ENCODE measurements at regions of chr5 and their contacts with region 1.

Region 1: GRCh38 chr5:109688971-109689739 is 572 bp upstream of the MAN2A1 start:
- DNase-seq: peak; percentile 94
- H3K4me3 ChIP-seq: peak overlapping the region; percentile 94
- H3K27ac ChIP-seq: peak overlapping the region; percentile 85
- H3K4me1 ChIP-seq: peaks cover 22% of the 10 kb centered on the region
- CTCF ChIP-seq: peak; percentile 35; the same call in 1 of the 2 replicates

Region 2: DNA sequence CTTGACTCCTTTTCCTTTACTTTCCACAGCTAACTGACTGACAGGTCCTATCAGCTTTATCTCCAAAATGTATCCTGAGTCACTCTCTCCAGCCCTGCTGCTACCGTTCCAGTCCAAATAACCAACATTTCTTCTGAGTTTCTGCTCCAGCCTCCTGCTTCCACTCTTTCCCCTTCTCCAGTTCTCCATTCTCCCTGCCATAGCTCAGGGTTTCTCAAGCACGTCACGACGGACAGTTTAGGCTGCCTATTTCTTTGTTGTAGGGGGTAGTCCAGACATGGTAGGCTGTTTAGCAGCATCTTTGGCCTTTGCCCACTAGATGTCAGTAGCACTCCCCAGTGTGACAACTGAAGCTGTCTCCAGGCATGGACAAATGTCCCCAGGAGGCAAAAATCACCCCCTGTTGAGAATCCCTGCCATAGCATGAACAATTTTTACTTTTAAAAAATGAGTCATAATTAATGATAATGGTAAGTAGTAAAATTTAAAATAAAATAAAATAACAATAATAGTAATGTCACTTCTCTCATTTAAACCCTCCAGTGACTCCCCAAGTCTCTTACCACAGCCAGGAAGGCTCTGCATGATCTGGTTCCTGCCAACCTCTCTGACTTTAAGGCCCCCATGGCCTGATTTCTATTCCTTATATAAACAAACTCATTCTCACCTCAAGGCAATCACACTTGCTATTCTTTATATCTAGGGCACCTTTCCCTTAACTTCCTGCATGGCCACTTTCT is 1046.8 kb before region 1 on chr5:
- CTCF ChIA-PET with region 1: no interaction called
- POLR2A ChIA-PET with region 1: interaction called, 3 read pairs
- intact Hi-C with region 1: loop called (anchors 5 kb)
- DNase-seq: peak; percentile 61
- H3K4me3 ChIP-seq: no peak overlapping the region
- H3K27ac ChIP-seq: no peak overlapping the region
- H3K4me1 ChIP-seq: no peaks in the 10 kb centered on the region
- CTCF ChIP-seq: peak; percentile 89

Region 3: DNA sequence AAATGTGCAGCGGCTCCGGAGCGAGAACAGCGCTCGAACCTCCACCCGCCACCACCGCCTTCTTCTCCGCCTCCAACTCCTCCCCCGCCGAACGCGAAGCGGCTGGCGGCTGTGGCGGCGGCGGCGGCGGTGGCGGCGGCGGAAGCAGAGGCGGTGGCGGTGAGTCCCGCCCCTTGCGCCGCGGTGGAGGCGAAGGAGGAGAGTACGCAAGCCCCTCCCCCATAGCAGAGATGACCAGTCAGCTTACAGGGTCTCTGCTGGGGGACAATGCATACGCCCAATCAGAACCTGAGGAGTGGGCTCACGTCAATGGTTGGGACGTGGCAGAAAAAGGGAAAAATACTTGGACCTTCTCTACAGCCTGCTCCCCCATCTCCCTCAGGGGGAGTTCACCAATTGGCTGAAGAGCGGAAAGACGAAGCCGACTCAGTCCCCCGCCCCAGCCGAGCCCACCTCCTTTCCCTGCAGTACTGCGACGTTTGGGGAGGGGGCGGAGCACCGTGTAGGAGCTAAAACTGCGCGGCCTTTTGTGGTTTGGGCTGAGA is 279.2 kb before region 1 on chr5 and contains the start of gene PJA2:
- CTCF ChIA-PET with region 1: no interaction called
- POLR2A ChIA-PET with region 1: interaction called, 6 read pairs
- intact Hi-C with region 1: loop called (anchors 2 kb)
- DNase-seq: peak; percentile 99
- H3K4me3 ChIP-seq: peak within 1 kb of the TSS; percentile 94
- H3K27ac ChIP-seq: peak within 1 kb of the TSS; percentile 94
- H3K4me1 ChIP-seq: peaks cover 28% of the 10 kb centered on the region
- CTCF ChIP-seq: no peak
- total RNA-seq, gene PJA2: 41.3 and 47.9 TPM in 2 replicates

Region 4: GRCh38 chr5:110054240-110054639 is 365.1 kb after region 1 on chr5:
- CTCF ChIA-PET with region 1: no interaction called
- POLR2A ChIA-PET with region 1: interaction called, 3 read pairs
- intact Hi-C with region 1: loop called (anchors 1 kb)
- DNase-seq: peak; percentile 92
- H3K4me3 ChIP-seq: peak overlapping the region; percentile 42
- H3K27ac ChIP-seq: peak overlapping the region; percentile 65
- H3K4me1 ChIP-seq: peaks cover 25% of the 10 kb centered on the region
- CTCF ChIP-seq: peak; percentile 71

Region 5: GRCh38 chr5:110738812-110739651 is 1049.9 kb after region 1 on chr5 and contains the start of gene SLC25A46:
- CTCF ChIA-PET with region 1: no interaction called
- POLR2A ChIA-PET with region 1: no interaction called
- intact Hi-C with region 1: loop called (anchors 10 kb)
- DNase-seq: peak; percentile 92
- H3K4me3 ChIP-seq: peak within 1 kb of the TSS; percentile 94
- H3K27ac ChIP-seq: peak within 1 kb of the TSS; percentile 66
- H3K4me1 ChIP-seq: peaks cover 16% of the 10 kb centered on the region
- CTCF ChIP-seq: no peak
- total RNA-seq, gene SLC25A46: 36.4 and 37.8 TPM in 2 replicates

Measured in OCI-LY7 (cell line).